ENCODE measurements at regions of chr6 and their contacts with region 1.

Region 1: GRCh38 chr6:71012866-71013469 is 56.1 kb upstream of the B3GAT2 start:
- DNase-seq: peak; percentile 70
- H3K4me3 ChIP-seq: no peak overlapping the region
- H3K27ac ChIP-seq: no peak overlapping the region
- H3K4me1 ChIP-seq: no peaks in the 10 kb centered on the region
- H3K27me3 ChIP-seq: no peaks in the 10 kb centered on the region
- CTCF ChIP-seq: peak; percentile 83

Region 2: DNA sequence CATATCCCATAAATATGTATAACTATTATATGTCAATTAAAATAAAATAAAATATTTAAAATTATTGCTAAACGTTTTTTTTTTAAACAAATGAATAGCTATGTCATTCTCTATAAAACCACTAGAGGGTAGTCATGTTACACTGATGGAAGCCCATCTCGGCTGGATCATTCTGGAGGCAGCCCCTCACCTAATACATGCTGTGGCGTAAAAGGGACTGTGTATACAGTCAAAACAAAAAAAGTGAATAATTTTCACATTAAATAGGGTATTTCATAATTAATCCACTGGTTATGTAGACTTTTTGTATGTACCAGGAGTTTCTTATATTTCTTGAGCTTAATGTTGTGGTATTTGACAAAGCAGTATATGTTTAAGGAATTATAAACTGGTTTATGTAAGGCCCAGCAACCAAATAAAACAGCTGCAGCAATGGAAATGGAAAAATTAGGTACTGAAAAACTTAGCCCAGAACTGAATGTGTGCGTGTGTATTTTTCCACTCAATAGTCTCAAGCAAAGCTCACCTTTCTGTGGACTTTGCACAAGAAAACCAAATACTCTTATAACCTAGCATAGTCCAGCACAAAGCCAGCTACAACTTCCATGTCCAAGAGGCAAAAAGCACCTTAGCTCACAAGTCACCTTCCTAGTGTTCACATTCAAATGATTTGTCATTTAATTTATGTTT is 791.8 kb before region 1 on chr6:
- CTCF ChIA-PET with region 1: interaction called, 3 read pairs
- POLR2A ChIA-PET with region 1: no interaction called
- intact Hi-C with region 1: loop called (anchors 5 kb)
- DNase-seq: peak; percentile 59
- H3K4me3 ChIP-seq: no peak overlapping the region
- H3K27ac ChIP-seq: no peak overlapping the region
- H3K4me1 ChIP-seq: no peaks in the 10 kb centered on the region
- H3K27me3 ChIP-seq: peaks cover 20% of the 10 kb centered on the region
- CTCF ChIP-seq: peak; percentile 75

Region 3: GRCh38 chr6:70369332-70369950 is 643.5 kb before region 1 on chr6:
- CTCF ChIA-PET with region 1: no interaction called
- POLR2A ChIA-PET with region 1: no interaction called
- intact Hi-C with region 1: loop called (anchors 2 kb)
- DNase-seq: peak; percentile 84
- H3K4me3 ChIP-seq: no peak overlapping the region
- H3K27ac ChIP-seq: no peak overlapping the region
- H3K4me1 ChIP-seq: peaks cover 32% of the 10 kb centered on the region
- H3K27me3 ChIP-seq: peaks cover 22% of the 10 kb centered on the region
- CTCF ChIP-seq: peak; percentile 94

Region 4: GRCh38 chr6:70520575-70520974 is 492.4 kb before region 1 on chr6:
- CTCF ChIA-PET with region 1: no interaction called
- POLR2A ChIA-PET with region 1: no interaction called
- intact Hi-C with region 1: loop called (anchors 2 kb)
- DNase-seq: peak; percentile 11
- H3K4me3 ChIP-seq: no peak overlapping the region
- H3K27ac ChIP-seq: no peak overlapping the region
- H3K4me1 ChIP-seq: no peaks in the 10 kb centered on the region
- H3K27me3 ChIP-seq: no peaks in the 10 kb centered on the region
- CTCF ChIP-seq: peak; percentile 48; the same call in 1 of the 2 replicates

Region 5: DNA sequence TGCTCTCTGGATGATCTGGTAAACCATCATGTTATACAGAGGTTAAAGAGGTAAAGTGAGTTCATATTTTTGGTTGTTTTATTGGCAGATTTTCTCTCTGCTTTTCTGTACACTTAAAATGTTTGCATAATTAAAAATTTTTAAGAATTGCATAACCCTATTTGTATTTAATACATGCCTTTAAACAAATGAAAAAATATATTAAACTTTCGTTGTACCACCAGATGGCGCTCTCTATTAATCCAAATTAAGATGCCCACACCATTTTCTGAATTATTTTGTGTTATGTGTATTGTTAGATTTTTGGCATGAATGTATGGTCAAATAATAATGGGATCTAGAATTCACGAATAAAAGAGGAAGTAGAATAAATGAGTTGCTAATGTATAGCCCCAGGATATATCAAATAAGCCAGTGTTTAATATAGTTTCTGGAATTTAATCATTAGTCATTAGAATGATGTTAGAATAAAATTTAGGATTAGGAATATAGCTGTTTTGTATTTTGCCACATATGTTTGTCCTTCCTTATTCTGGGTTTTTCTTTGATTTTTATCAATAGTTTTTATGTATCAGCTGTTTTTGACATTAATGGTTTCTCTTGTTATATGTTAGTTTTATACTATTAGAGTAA is 306.4 kb before region 1 on chr6:
- CTCF ChIA-PET with region 1: interaction called, 3 read pairs
- POLR2A ChIA-PET with region 1: no interaction called
- intact Hi-C with region 1: loop called (anchors 2 kb)
- DNase-seq: peak; percentile 59
- H3K4me3 ChIP-seq: no peak overlapping the region
- H3K27ac ChIP-seq: no peak overlapping the region
- H3K4me1 ChIP-seq: peaks cover 5% of the 10 kb centered on the region
- H3K27me3 ChIP-seq: no peaks in the 10 kb centered on the region
- CTCF ChIP-seq: peak; percentile 70

Region 6: DNA sequence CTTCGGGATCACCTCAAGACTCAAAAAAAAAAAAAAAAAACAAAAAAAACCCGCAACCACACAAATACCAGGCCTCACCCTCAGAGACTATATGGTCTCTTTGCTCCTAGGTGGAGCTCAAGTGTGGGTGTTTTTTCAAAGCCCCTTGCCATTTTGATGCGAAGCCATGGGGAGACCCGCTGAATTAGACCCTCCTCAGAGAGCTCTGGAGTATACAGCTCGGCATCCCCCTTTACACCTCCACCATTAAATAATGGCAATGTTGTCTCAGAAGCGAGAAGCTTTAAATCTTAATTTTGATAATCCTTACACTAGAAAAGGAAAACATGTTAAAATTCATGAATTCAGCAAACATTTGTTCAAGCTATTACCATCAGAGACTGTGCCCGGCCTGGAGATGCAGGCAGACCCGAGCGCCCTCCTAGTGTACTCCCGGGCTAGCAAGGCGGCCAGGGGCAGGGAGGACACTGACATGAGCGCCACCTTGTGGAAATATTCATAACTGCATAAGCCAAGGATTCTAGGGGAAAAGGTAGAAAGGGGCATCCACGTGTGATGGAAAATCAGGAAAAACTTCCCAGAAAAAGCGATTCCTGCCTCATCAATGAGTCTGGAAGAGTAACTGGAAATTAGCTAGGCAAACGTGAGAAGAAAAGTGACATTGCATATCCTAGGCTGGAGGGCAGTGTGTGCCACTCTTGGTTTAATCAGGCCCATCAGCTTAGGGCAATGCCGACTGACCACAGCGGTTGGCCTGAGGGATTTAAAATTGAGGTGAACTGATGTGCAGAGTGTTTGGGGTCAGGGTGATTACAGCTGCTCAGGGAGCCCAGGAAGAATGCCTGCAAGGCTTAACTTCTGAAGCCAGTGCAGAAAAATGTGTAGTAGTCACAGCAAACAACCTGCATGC is 128.6 kb before region 1 on chr6:
- CTCF ChIA-PET with region 1: no interaction called
- POLR2A ChIA-PET with region 1: no interaction called
- intact Hi-C with region 1: loop called (anchors 5 kb)
- DNase-seq: peak; percentile 72
- H3K4me3 ChIP-seq: no peak overlapping the region
- H3K27ac ChIP-seq: no peak overlapping the region
- H3K4me1 ChIP-seq: no peaks in the 10 kb centered on the region
- H3K27me3 ChIP-seq: no peaks in the 10 kb centered on the region
- CTCF ChIP-seq: peak; percentile 92

Region 7: DNA sequence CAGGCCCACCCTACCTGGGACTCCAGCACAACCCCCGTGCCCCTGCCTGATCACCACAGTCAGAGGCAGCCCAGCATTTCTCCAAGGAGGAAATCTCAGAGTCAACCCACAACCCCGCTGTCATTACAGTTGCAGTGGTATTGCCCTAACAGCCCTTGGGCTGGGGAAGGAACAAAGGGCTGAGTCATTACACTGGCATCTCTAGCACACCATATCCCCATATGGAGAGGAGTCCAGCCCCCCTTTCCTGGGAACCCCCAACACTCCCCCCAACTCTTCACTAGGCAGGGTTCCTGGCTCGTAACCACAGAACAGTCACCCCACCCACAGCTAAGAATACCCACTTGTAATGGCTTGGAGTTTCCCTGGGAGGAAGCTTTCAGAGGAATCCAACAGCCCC is 126.3 kb after region 1 on chr6:
- CTCF ChIA-PET with region 1: no interaction called
- POLR2A ChIA-PET with region 1: no interaction called
- intact Hi-C with region 1: no loop called
- DNase-seq: no peak
- H3K4me3 ChIP-seq: no peak overlapping the region
- H3K27ac ChIP-seq: no peak overlapping the region
- H3K4me1 ChIP-seq: no peaks in the 10 kb centered on the region
- H3K27me3 ChIP-seq: peaks cover 13% of the 10 kb centered on the region
- CTCF ChIP-seq: no peak